Activated CD4-positive, alpha-beta memory T cell treated with anti-CD3 and anti-CD28 coated beads, Interleukin-2, amount 10 ng/mL, durations not matched to agents 7 days and 5 days (primary cell): ENCODE measurements at regions of chr2 and their contacts with region 1.

Region 1: DNA sequence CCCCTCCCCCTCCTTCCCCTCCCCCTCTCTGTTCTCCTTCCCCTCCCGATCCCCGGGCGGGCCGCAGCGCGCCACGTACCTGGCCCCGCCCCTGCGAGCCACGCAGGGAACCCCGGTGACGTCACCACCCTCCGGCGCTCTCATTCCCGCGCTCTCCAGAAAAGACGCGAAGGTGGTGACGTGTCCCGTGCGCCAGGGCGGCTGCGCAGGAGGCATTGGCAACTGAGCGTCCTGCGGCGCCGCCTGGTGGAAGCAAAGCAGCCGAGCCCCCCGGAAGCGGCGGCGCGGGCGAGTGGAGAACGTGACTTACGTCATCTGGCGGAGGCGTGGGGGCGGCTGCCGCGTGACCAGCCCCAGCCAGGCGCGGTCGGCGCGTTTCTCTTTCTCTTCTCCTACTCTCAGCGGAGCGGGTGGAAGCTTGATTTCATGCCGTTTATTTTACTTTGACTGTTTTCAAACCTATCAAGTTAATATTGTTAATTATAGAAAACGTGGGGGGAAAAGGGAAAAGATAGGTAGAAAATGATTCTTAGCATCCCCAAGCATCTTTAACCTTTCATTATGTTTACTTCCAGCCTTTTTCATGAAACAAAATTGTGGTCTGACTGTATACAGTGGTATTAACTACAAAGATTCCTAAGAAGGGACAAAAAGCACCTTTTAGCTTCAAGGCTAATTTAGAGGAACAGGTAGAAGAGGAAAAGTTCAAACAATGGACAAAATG is 48.1 kb downstream of the C2orf42 start:
- DNase-seq: peak; percentile 100
- H3K4me3 Mint-ChIP-seq: peak overlapping the region; percentile 80
- H3K27ac Mint-ChIP-seq: peak overlapping the region; percentile 97
- H3K4me1 Mint-ChIP-seq: peaks cover 71% of the 10 kb centered on the region
- H3K27me3 Mint-ChIP-seq: no peaks in the 10 kb centered on the region

Region 2: GRCh38 chr2:70043252-70043875 is 99.4 kb before region 1 on chr2:
- CTCF ChIA-PET with region 1: interaction called, 5 read pairs
- POLR2A ChIA-PET with region 1: interaction called, 46 read pairs
- DNase-seq: peak; percentile 89
- H3K4me3 Mint-ChIP-seq: peak overlapping the region; percentile 44
- H3K27ac Mint-ChIP-seq: peak overlapping the region; percentile 97
- H3K4me1 Mint-ChIP-seq: peaks cover 75% of the 10 kb centered on the region
- H3K27me3 Mint-ChIP-seq: no peaks in the 10 kb centered on the region

Region 3: DNA sequence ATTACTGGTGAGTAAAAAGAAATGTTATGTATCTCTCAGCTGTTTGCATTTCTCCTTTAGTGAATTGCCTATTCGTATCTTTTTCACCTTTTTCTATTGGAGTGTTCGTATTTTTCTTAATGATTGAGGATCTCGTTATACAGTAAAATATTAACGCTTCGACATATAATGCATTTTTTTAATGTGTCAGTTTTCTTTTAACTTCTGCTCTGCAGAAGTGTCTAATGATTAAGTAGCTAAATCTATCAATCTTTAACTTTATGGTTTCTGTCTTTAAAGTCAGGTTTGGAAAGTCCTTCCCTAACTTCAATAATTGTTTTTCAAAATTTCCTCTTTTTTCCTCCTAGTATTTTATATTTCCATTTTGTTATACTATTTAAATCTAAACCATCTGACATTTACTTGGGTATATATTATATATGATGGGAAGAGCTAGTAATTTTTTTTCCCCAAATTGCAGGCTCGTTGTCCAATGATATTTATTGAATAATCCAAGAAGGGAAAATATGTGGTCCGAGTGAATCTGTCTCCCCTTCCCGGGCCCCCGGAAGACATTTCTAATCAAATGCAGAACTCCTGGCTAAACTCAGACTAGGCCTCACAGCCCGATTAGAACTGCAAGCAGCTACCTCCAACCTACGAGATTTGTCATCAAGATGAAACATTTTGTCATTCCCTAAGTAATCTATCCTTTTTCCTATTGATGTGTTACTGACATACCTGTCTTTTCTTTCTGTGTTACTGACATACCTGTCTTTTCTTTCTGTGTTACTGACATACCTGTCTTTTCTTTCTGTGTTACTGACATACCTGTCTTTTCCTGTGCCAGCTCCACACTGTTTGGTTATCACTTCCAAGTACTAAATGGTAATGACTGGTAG is 38.3 kb before region 1 on chr2:
- CTCF ChIA-PET with region 1: interaction called, 8 read pairs
- POLR2A ChIA-PET with region 1: interaction called, 496 read pairs
- DNase-seq: peak; percentile 54
- H3K4me3 Mint-ChIP-seq: peak overlapping the region; percentile 72
- H3K27ac Mint-ChIP-seq: peak overlapping the region; percentile 90
- H3K4me1 Mint-ChIP-seq: peaks cover 56% of the 10 kb centered on the region
- H3K27me3 Mint-ChIP-seq: no peaks in the 10 kb centered on the region

Region 4: GRCh38 chr2:70132244-70133126 is 10.3 kb before region 1 on chr2:
- CTCF ChIA-PET with region 1: interaction called, 36 read pairs
- POLR2A ChIA-PET with region 1: interaction called, 197 read pairs
- DNase-seq: peak; percentile 53
- H3K4me3 Mint-ChIP-seq: peak overlapping the region; percentile 72
- H3K27ac Mint-ChIP-seq: peak overlapping the region; percentile 94
- H3K4me1 Mint-ChIP-seq: peaks cover 76% of the 10 kb centered on the region
- H3K27me3 Mint-ChIP-seq: no peaks in the 10 kb centered on the region

Region 5: DNA sequence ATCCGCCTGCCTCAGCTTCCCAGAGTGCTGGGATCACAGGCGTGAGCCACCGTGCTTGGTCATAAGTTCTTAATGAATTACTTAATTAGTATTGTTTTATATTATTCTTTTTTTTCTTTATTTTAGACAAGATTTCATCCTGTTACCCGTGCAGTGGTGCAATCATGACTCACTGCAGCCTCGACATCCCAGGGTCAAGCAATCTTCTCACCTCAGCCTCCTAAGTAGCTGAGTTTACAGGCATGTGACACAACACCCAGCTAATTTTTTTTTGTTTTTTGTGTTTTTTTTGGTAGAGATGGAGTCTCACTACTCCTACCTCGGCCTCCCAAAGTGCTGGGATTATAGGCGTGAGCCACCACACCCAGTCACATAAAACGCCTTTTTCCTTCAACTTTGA is 30.8 kb after region 1 on chr2:
- CTCF ChIA-PET with region 1: no interaction called
- POLR2A ChIA-PET with region 1: no interaction called
- DNase-seq: no peak
- H3K4me3 Mint-ChIP-seq: no peak overlapping the region
- H3K27ac Mint-ChIP-seq: no peak overlapping the region
- H3K4me1 Mint-ChIP-seq: no peaks in the 10 kb centered on the region
- H3K27me3 Mint-ChIP-seq: no peaks in the 10 kb centered on the region